Activated CD4-positive, alpha-beta T cell treated with anti-CD3 and anti-CD28 coated beads for 36 hours (primary cell): ENCODE measurements at regions of chr6 and their contacts with region 1.

Region 1: GRCh38 chr6:24855395-24856245 is 56.9 kb upstream of the ARMH2 start:
- DNase-seq: peak; percentile 79
- ATAC-seq: peak; percentile 61
- H3K4me3 Mint-ChIP-seq: peak overlapping the region; percentile 46
- H3K27ac Mint-ChIP-seq: peak overlapping the region; percentile 90
- H3K4me1 Mint-ChIP-seq: peaks cover 52% of the 10 kb centered on the region
- H3K27me3 Mint-ChIP-seq: no peaks in the 10 kb centered on the region

Region 2: GRCh38 chr6:24766680-24767462 is 88.7 kb before region 1 on chr6:
- CTCF ChIA-PET with region 1: no interaction called
- POLR2A ChIA-PET with region 1: no interaction called
- intact Hi-C with region 1: no loop called
- DNase-seq: no peak
- ATAC-seq: peak; percentile 76
- H3K4me3 Mint-ChIP-seq: no peak overlapping the region
- H3K27ac Mint-ChIP-seq: no peak overlapping the region
- H3K4me1 Mint-ChIP-seq: no peaks in the 10 kb centered on the region
- H3K27me3 Mint-ChIP-seq: no peaks in the 10 kb centered on the region

Region 3: DNA sequence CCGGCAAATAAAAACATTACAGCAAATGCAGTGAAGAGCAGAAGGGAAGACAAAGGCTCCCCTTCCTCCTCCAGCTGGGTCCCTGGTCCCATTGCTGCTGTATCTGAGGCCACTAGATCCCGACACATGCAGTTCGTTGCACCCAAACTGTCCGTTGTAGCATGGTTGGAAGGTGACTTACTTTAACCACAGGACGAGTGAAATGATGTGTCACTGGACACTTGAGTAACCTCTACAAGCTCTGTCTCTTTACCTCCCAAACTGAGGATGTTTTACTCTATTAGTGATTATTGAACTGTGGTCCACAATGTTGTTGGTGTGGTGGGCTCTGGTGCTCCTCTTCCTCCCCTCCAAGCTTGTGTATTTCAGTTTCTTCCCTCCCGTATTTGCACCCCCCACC is 10.7 kb before region 1 on chr6:
- CTCF ChIA-PET with region 1: interaction called, 21 read pairs
- POLR2A ChIA-PET with region 1: no interaction called
- intact Hi-C with region 1: no loop called
- DNase-seq: no peak
- ATAC-seq: no peak
- H3K4me3 Mint-ChIP-seq: no peak overlapping the region
- H3K27ac Mint-ChIP-seq: peak overlapping the region; percentile 55
- H3K4me1 Mint-ChIP-seq: peaks cover 70% of the 10 kb centered on the region
- H3K27me3 Mint-ChIP-seq: no peaks in the 10 kb centered on the region

Region 4: GRCh38 chr6:24876499-24877465 is 21.2 kb after region 1 on chr6:
- CTCF ChIA-PET with region 1: interaction called, 37 read pairs
- POLR2A ChIA-PET with region 1: no interaction called
- intact Hi-C with region 1: no loop called
- DNase-seq: no peak
- ATAC-seq: no peak
- H3K4me3 Mint-ChIP-seq: no peak overlapping the region
- H3K27ac Mint-ChIP-seq: peak overlapping the region; percentile 40
- H3K4me1 Mint-ChIP-seq: peaks cover 68% of the 10 kb centered on the region
- H3K27me3 Mint-ChIP-seq: no peaks in the 10 kb centered on the region

Region 5: GRCh38 chr6:24891004-24891403 is 35.4 kb after region 1 on chr6:
- CTCF ChIA-PET with region 1: interaction called, 16 read pairs
- POLR2A ChIA-PET with region 1: no interaction called
- intact Hi-C with region 1: no loop called
- DNase-seq: peak; percentile 39
- ATAC-seq: peak; percentile 67
- H3K4me3 Mint-ChIP-seq: no peak overlapping the region
- H3K27ac Mint-ChIP-seq: peak overlapping the region; percentile 93
- H3K4me1 Mint-ChIP-seq: peaks cover 87% of the 10 kb centered on the region
- H3K27me3 Mint-ChIP-seq: no peaks in the 10 kb centered on the region

Region 6: DNA sequence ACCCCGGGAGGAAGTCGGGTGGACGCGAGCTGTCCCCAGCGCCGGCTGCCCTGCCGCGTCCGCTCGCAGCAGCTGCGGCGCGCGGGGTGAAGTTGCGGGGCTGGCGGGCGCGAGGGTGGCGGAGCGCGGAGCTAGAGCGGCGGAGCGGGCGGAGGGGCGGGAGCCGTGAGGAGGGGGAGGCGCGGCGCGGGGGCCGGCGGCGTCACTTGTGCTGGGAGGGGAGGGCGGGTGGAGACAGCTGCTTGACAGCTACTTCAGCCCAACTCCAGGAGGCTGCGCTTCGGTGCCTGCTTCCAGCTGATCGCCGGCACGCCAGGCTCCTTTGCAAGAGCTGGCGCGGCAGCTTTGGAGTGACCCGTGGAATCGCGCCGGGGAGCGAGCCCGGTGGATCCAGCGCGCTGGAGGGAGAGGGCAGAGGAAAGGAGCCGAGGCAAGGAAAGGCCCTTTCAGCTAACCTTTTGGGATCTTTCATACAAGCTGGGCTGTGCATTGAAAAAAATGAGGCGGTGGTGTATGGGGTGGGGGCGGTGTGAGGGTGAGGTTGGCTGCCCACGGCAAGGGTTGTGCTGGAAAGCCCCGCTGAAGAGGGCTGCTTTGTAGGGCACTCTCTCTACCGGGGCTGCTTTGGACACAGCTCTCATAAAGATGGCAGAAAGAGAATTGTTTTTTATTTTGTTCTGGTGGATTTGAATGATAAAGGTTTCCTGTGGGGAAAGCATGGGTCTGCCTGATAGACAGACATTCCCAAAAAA is 55.5 kb after region 1 on chr6:
- CTCF ChIA-PET with region 1: interaction called, 13 read pairs
- POLR2A ChIA-PET with region 1: interaction called, 7 read pairs
- intact Hi-C with region 1: no loop called
- DNase-seq: peak; percentile 80
- ATAC-seq: peak; percentile 8
- H3K4me3 Mint-ChIP-seq: peak overlapping the region; percentile 85
- H3K27ac Mint-ChIP-seq: peak overlapping the region; percentile 90
- H3K4me1 Mint-ChIP-seq: peaks cover 83% of the 10 kb centered on the region
- H3K27me3 Mint-ChIP-seq: no peaks in the 10 kb centered on the region

Region 7: GRCh38 chr6:24974182-24975171 is 118.9 kb after region 1 on chr6:
- CTCF ChIA-PET with region 1: no interaction called
- POLR2A ChIA-PET with region 1: interaction called, 5 read pairs
- intact Hi-C with region 1: loop called in 1 of 2 experiments (anchors 1 kb)
- DNase-seq: peak; percentile 60
- ATAC-seq: peak; percentile 92
- H3K4me3 Mint-ChIP-seq: peak overlapping the region; percentile 33
- H3K27ac Mint-ChIP-seq: peak overlapping the region; percentile 86
- H3K4me1 Mint-ChIP-seq: peaks cover 59% of the 10 kb centered on the region
- H3K27me3 Mint-ChIP-seq: no peaks in the 10 kb centered on the region

Region 8: DNA sequence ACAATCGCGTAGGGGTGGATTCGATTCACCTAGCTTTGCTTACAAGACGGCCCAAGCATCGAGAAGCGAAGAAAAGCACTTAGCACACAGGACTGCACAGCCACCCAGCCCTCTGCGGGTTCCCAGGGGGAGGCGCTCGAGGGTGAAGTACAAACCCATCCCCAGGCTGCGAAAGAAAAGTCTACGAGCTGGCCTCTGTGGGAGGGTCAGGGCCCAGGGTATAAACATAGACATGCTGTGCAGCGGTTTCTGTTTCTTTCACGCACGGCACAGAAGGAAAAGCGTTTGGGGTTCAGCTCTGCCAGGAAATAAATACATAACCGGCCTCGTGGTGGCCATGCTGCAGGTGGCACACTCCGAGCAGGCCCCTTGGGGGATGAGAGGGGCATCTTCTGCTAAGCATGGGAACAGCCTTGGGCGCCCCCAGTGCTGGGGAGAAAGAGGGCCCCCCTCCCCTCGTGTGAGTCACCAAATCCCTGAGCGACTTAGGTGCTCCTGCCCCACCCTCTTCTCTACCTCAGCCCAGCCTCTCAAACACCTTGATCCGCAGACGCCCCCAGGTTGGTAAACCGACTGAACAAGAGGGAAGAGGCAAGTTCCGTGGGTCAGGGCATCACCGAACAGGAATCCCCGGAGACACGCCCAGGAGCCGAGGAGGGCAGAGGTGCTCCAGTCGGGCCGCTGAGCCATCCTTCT is 171.7 kb after region 1 on chr6:
- CTCF ChIA-PET with region 1: interaction called, 13 read pairs
- POLR2A ChIA-PET with region 1: interaction called, 5 read pairs
- intact Hi-C with region 1: no loop called
- DNase-seq: peak; percentile 90
- ATAC-seq: peak; percentile 95
- H3K4me3 Mint-ChIP-seq: peak overlapping the region; percentile 62
- H3K27ac Mint-ChIP-seq: peak overlapping the region; percentile 77
- H3K4me1 Mint-ChIP-seq: peaks cover 51% of the 10 kb centered on the region
- H3K27me3 Mint-ChIP-seq: no peaks in the 10 kb centered on the region